Activated naive CD4-positive, alpha-beta T cell treated with anti-CD3 and anti-CD28 coated beads for 36 hours (primary cell): ENCODE measurements at regions of chr21 and their contacts with region 1.

Region 1: DNA sequence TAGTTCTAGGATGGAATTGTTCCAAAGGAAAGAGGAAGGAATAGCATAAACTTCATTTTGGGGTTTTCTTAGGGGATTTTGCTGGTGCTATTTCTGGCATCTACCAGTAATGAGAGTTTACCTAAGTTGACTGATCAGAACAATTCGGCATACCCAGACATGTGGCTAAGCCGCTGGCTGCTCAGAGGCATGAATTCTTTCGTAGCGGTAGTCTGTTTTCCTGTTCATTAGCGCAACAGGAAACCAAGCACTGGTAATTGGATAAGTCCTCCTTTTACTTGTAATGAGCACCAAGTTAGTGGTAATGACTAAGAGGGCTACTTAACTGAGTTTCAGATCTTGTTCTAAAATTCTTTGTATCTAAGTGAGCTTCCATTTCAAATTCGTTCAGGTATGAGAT is 38.6 kb downstream of the C21orf91 start:
- DNase-seq: peak; percentile 77
- H3K4me3 Mint-ChIP-seq: peak overlapping the region; percentile 28
- H3K27ac Mint-ChIP-seq: peak overlapping the region; percentile 87
- H3K4me1 Mint-ChIP-seq: peaks cover 91% of the 10 kb centered on the region
- H3K27me3 Mint-ChIP-seq: no peaks in the 10 kb centered on the region

Region 2: DNA sequence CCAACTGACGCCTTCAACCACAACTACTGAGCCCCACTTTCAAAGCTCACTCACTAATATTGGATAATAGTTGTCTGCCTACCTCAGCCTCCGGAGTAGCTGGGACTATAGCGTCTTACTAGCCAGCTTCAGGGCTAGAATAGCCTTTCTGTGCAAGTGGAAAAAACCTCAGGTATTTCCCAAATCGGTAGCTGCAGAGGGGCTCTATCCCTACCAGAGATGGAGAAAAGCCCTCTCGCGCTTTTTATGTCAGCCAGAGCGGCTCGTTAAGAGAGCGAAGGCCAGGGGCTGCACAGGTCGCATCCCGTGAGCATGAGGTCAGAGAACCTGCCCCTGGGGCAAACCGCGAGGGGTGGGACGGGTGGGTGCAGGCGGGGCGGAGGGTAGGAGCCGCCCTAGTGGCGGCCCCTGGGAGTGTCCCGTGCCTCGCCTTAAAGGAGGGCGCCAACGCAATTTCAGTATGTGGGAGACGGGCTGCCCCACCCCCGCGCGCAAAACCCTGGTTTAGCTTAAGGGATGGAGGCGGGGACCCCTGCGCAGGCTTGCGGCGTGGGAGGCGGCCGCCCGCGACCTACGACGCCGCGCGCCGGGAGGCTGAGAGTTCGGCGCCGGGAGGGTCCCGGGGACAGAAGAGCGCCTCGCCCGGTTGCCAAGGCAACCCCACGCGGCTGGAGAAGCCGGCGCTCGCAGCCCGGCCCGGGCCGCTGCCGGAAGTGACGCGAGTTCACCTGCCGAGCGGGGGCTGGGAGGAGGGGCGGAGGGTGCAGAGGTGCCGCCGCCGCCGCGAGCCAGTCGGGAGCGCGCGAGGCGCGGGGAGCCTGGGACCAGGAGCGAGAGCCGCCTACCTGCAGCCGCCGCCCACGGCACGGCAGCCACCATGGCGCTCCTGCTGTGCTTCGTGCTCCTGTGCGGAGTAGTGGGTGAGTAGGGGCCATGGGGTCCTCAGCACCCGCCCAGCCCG is 268.0 kb before region 1 on chr21 and contains the start of gene CXADR:
- CTCF ChIA-PET with region 1: no interaction called
- intact Hi-C with region 1: loop called (anchors 2 kb)
- DNase-seq: peak; percentile 81
- H3K4me3 Mint-ChIP-seq: peak within 1 kb of the TSS; percentile 80
- H3K27ac Mint-ChIP-seq: no peak within 1 kb of the TSS
- H3K4me1 Mint-ChIP-seq: peaks cover 14% of the 10 kb centered on the region
- H3K27me3 Mint-ChIP-seq: peaks cover 23% of the 10 kb centered on the region
- total RNA-seq, gene CXADR: 0.27 to 0.52 TPM

Region 3: DNA sequence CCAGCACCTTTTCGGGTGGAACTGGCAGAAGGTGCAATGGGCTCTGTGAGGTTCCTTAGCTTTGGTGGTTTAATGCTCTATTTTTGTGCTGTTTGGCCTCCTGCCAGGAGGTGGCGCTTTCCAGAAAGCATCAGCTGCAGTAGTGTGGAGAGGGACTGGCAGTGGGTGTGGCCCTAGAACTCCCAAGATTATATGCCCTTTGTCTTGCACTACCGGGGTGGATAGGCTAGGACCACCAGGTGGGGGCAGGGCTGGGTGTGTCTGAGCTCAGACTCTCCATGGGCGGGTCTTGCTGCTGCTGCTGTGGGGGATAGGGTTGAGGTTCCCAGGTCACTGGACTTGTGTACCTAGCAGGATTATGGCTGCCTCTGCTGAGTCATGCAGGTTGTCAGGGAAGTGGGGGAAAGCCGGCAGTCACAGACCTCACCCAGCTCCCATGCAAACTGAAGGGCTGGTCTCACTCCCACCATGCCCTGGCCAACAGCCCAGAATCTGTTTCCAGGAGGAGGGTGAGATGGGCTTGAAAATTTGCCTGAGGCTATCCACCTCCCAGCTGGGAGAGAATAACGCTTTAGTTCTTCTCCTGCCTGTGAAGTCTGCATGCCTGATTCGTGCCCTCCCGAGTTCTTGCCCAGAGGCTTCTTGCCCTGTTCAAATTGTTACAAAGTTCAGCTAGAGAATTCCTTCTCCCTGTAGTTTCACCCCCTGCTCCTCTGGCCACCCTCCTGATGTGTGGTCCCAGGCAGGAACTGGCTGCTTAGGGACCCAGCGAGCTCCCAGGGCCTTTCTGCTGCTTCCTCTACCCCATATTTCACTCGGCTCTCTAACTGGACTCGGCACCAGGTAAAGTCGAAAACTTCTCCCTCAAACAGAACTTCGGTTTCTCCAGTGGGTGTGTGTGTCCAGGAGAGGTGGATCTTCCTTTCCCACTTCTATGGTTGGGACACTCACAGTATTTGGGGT is 91.3 kb before region 1 on chr21:
- CTCF ChIA-PET with region 1: interaction called, 6 read pairs
- intact Hi-C with region 1: loop called (anchors 2 kb)
- DNase-seq: peak; percentile 74
- H3K4me3 Mint-ChIP-seq: no peak overlapping the region
- H3K27ac Mint-ChIP-seq: no peak overlapping the region
- H3K4me1 Mint-ChIP-seq: peaks cover 32% of the 10 kb centered on the region
- H3K27me3 Mint-ChIP-seq: peaks cover 2% of the 10 kb centered on the region

Region 4: DNA sequence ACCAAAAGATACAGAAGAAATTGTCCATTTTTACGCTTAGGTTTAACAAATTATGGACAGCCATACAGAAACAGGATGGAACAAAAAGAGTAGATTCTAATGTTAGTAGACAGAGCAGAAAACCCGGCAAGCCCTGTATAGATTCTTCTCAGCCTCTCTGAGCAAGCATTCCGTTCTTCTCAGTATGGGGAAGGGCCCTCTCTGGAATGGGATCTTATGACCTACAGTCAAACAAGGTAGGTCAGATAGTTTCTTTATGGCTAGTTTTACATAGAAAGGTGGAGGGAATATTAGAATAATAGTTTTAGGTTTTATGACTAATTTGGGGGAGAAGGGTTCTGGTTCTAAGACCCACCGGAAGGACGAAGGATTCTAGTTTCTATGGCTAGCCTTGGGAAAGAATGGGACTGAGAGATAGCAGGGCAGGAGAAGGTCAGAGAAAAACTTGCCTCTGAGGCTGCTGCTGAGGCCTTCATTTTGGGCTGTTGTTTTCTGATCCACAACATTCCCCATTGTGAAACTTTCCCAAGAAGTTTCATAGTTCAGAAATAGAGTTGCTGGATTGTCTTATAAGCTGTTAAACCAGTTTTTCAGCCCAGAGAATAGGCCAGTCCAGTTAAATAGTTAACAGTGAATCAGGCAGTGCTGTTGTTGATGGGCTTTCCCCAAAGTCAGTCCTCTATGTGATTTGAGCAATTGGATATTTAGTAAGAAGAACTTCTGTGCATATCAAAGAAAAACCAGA is 38.6 kb before region 1 on chr21:
- CTCF ChIA-PET with region 1: no interaction called
- intact Hi-C with region 1: loop called (anchors 1 kb)
- DNase-seq: no peak
- H3K4me3 Mint-ChIP-seq: no peak overlapping the region
- H3K27ac Mint-ChIP-seq: no peak overlapping the region
- H3K4me1 Mint-ChIP-seq: peaks cover 28% of the 10 kb centered on the region
- H3K27me3 Mint-ChIP-seq: no peaks in the 10 kb centered on the region

Region 5: DNA sequence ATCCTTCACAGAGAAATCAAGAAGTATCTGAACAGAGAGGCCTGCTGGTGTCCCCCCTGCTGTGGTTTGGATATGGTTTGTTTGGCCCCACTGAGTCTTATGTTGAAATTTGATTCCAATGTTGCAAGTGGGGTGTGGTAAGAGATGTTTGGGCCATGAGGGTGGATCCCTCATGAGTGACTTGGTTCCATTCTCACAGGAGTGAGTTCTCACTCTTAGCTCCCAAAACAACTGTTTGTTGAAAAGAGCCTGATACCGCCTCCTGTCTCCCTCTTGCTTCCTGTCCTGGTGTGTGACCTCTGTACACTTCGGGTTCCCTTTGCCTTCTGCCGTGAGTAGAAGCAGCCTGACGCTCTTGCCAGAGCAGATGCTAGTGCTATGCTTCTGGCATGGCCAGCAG is 21.9 kb before region 1 on chr21:
- CTCF ChIA-PET with region 1: no interaction called
- intact Hi-C with region 1: no loop called
- DNase-seq: no peak
- H3K4me3 Mint-ChIP-seq: no peak overlapping the region
- H3K27ac Mint-ChIP-seq: no peak overlapping the region
- H3K4me1 Mint-ChIP-seq: peaks cover 1% of the 10 kb centered on the region
- H3K27me3 Mint-ChIP-seq: no peaks in the 10 kb centered on the region

Region 6: DNA sequence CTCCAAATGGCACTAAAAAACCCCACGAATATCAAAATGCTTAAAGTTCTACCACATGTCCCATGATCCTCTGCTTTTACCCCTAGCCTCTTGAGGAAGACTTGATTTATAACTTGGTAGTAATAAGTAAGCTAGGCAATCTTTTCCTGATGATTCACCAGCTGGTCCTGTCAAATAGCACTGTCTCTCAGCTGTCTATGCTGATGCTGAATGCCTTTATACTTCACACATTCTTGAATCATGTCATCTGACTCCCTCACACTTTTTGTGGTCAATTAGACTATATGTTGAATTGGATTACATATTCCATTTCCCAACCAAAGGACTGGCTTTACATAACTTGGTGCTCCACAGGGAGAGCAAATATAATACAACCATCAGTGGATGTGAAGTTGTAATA is 22.0 kb after region 1 on chr21:
- CTCF ChIA-PET with region 1: interaction called, 4 read pairs
- intact Hi-C with region 1: loop called (anchors 1 kb)
- DNase-seq: no peak
- H3K4me3 Mint-ChIP-seq: no peak overlapping the region
- H3K27ac Mint-ChIP-seq: no peak overlapping the region
- H3K4me1 Mint-ChIP-seq: peaks cover 56% of the 10 kb centered on the region
- H3K27me3 Mint-ChIP-seq: no peaks in the 10 kb centered on the region